ENCODE measurements at regions of chr3 and their contacts with region 1.

Region 1: DNA sequence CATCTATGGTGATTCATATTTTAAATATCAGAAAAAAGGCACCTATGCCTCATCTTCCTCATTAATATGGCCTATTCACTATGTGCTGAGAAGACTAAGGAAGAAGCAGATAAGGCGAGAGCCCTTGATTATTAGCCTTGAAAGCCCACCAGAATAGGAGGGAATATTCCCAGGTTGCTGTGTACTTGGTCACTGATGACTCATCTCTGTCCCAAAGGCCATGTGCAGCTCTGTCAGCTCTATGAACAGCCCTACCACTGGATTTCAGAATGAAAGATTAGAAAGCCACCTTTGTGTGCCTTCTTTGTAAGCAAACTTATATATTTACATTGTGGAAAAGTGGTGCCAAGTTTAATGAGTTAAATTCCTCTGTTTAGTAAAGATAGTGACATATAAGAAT is 211.5 kb downstream of the NFKBIZ start:
- DNase-seq: peak; percentile 60
- ATAC-seq: peak; percentile 89
- H3K4me3 ChIP-seq: no peak overlapping the region
- H3K27ac ChIP-seq: no peak overlapping the region
- H3K4me1 ChIP-seq: peaks cover 6% of the 10 kb centered on the region
- H3K27me3 ChIP-seq: 0 out of 5 replicates have a peak, but pooled peaks cover 0 to 5% of the 10 kb centered on the region in 2 experiments
- CTCF ChIP-seq: no peak
- EP300 ChIP-seq: 0 out of 4 replicates have a peak, but pooled peaks of 1 of the 2 experiments have one; percentile 17
- POLR2A ChIP-seq: no peak
- RAD21 ChIP-seq: no peak

Region 2: DNA sequence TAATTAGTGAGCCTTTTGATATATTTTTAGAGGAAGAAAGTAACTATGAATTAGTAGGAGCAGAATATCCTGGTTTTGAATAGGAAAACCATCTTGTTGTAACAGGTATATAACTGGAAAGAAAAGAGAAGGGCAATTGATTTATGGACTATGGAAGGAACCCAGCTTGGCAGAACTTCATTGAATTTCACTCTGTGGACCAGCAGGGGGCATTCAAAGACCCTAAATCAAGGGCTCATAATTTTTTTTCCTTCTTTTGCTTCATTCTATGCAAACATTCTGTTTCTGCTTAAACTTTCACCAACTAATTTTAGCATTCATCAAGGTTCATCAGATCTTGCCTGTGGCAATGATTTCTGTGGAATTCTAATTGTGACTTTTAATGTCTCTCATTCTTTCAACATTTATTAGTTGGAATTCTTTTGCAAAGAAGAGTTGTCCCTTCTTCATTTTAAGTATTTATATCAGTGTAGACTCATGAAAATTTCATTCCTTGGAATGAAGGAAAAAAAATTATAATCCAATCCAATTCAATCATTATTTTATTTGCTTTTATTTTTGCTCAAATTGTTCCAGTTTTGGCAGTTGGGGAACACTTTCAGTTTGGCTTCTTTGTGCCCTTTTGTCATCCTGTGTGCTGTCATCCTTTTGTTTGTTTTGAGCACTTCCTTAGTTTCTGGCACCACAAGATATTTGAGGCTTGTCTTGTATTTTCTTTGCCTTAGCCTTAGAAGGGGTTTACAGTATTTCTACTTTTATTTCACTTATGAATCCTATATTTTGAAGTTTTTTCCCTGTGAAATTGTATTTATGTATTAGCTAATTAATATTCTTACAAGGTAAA is 251.4 kb before region 1 on chr3:
- CTCF ChIA-PET with region 1: no interaction called
- POLR2A ChIA-PET with region 1: no interaction called
- in situ Hi-C with region 1: no loop called
- intact Hi-C with region 1: loop called (anchors 5 kb)
- DNase-seq: peak; percentile 29
- ATAC-seq: peak; percentile 66
- H3K4me3 ChIP-seq: no peak overlapping the region
- H3K27ac ChIP-seq: no peak overlapping the region
- H3K4me1 ChIP-seq: peaks cover 23% of the 10 kb centered on the region
- H3K27me3 ChIP-seq: no peaks in the 10 kb centered on the region
- CTCF ChIP-seq: peak; percentile 71
- EP300 ChIP-seq: no peak
- POLR2A ChIP-seq: no peak
- RAD21 ChIP-seq: peak; percentile 57

Measured in HepG2 (cell line).